A673 (cell line): ENCODE measurements at regions of chr12 and their contacts with region 1.

Region 1: DNA sequence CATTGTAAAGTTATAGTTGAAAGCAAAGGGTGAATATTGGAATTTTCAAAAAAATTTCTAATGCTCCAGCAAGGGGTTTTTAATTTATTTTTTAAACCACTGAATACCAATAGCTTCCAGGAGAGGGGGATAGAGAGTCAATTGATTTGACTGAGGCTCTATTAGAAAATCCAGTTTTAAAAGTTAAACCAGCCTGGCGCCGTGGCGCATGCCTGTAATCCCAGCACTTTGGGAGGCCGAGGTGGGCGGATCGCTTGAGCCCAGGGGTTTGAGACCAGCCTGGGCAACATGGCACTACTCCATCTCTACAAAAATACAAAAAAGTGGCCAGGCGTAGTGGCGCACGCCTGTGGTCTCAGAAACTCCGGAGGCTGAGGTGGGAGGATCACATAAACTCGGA is 150.1 kb downstream of the SLC38A4 start:
- DNase-seq: peak; percentile 82
- H3K4me3 ChIP-seq: no peak overlapping the region
- H3K27ac ChIP-seq: no peak overlapping the region
- H3K4me1 ChIP-seq: peaks cover 21% of the 10 kb centered on the region
- H3K27me3 ChIP-seq: no peaks in the 10 kb centered on the region
- CTCF ChIP-seq: peak; percentile 65

Region 2: GRCh38 chr12:46071769-46072624 is 603.7 kb before region 1 on chr12:
- CTCF ChIA-PET with region 1: no interaction called
- POLR2A ChIA-PET with region 1: no interaction called
- intact Hi-C with region 1: loop called (anchors 5 kb)
- DNase-seq: peak; percentile 87
- H3K4me3 ChIP-seq: no peak overlapping the region
- H3K27ac ChIP-seq: no peak overlapping the region
- H3K4me1 ChIP-seq: no peaks in the 10 kb centered on the region
- H3K27me3 ChIP-seq: no peaks in the 10 kb centered on the region
- CTCF ChIP-seq: peak; percentile 96

Region 3: GRCh38 chr12:46124848-46125619 is 550.7 kb before region 1 on chr12:
- CTCF ChIA-PET with region 1: no interaction called
- POLR2A ChIA-PET with region 1: no interaction called
- intact Hi-C with region 1: loop called (anchors 5 kb)
- DNase-seq: peak; percentile 92
- H3K4me3 ChIP-seq: peak overlapping the region; percentile 18
- H3K27ac ChIP-seq: peak overlapping the region; percentile 3
- H3K4me1 ChIP-seq: no peaks in the 10 kb centered on the region
- H3K27me3 ChIP-seq: no peaks in the 10 kb centered on the region
- CTCF ChIP-seq: peak; percentile 93

Region 4: GRCh38 chr12:46153268-46153872 is 522.4 kb before region 1 on chr12:
- CTCF ChIA-PET with region 1: no interaction called
- POLR2A ChIA-PET with region 1: no interaction called
- intact Hi-C with region 1: loop called (anchors 2 kb)
- DNase-seq: peak; percentile 55
- H3K4me3 ChIP-seq: no peak overlapping the region
- H3K27ac ChIP-seq: no peak overlapping the region
- H3K4me1 ChIP-seq: peaks cover 35% of the 10 kb centered on the region
- H3K27me3 ChIP-seq: no peaks in the 10 kb centered on the region
- CTCF ChIP-seq: peak; percentile 87

Region 5: GRCh38 chr12:46179683-46180452 is 495.9 kb before region 1 on chr12:
- CTCF ChIA-PET with region 1: no interaction called
- POLR2A ChIA-PET with region 1: no interaction called
- intact Hi-C with region 1: no loop called
- DNase-seq: no peak
- H3K4me3 ChIP-seq: no peak overlapping the region
- H3K27ac ChIP-seq: no peak overlapping the region
- H3K4me1 ChIP-seq: no peaks in the 10 kb centered on the region
- H3K27me3 ChIP-seq: no peaks in the 10 kb centered on the region
- CTCF ChIP-seq: no peak

Region 6: GRCh38 chr12:46342562-46343033 is 333.1 kb before region 1 on chr12:
- CTCF ChIA-PET with region 1: no interaction called
- POLR2A ChIA-PET with region 1: no interaction called
- intact Hi-C with region 1: loop called (anchors 2 kb)
- DNase-seq: peak; percentile 83
- H3K4me3 ChIP-seq: no peak overlapping the region
- H3K27ac ChIP-seq: no peak overlapping the region
- H3K4me1 ChIP-seq: no peaks in the 10 kb centered on the region
- H3K27me3 ChIP-seq: no peaks in the 10 kb centered on the region
- CTCF ChIP-seq: peak; percentile 77

Region 7: DNA sequence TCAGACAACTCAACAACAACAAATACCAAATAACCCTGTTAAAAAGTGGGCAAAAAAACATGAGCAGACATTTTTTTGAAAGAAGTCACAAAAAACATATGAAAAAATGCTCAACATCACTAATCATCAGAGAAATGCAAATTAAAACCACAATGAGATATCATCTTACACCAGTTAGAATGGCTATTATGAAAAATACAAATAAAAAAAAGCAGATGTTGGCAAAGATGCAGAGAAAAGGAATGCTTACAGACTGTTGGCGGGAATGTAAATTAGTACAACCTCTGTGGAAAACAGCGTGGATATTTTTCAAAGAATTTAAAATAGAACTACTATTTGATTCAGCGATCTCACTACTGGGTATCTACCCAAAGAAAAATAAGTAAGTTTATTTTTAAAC is 36.0 kb after region 1 on chr12:
- CTCF ChIA-PET with region 1: no interaction called
- POLR2A ChIA-PET with region 1: no interaction called
- intact Hi-C with region 1: no loop called
- DNase-seq: no peak
- H3K4me3 ChIP-seq: no peak overlapping the region
- H3K27ac ChIP-seq: no peak overlapping the region
- H3K4me1 ChIP-seq: no peaks in the 10 kb centered on the region
- H3K27me3 ChIP-seq: no peaks in the 10 kb centered on the region
- CTCF ChIP-seq: no peak

Region 8: GRCh38 chr12:46874642-46875041 is 198.9 kb after region 1 on chr12:
- CTCF ChIA-PET with region 1: no interaction called
- POLR2A ChIA-PET with region 1: no interaction called
- intact Hi-C with region 1: no loop called
- DNase-seq: no peak
- H3K4me3 ChIP-seq: no peak overlapping the region
- H3K27ac ChIP-seq: no peak overlapping the region
- H3K4me1 ChIP-seq: no peaks in the 10 kb centered on the region
- H3K27me3 ChIP-seq: no peaks in the 10 kb centered on the region
- CTCF ChIP-seq: no peak

Region 9: GRCh38 chr12:46933947-46934346 is 258.2 kb after region 1 on chr12:
- CTCF ChIA-PET with region 1: no interaction called
- POLR2A ChIA-PET with region 1: no interaction called
- intact Hi-C with region 1: loop called (anchors 5 kb)
- DNase-seq: peak; percentile 74
- H3K4me3 ChIP-seq: no peak overlapping the region
- H3K27ac ChIP-seq: peak overlapping the region; percentile 45
- H3K4me1 ChIP-seq: peaks cover 3% of the 10 kb centered on the region
- H3K27me3 ChIP-seq: no peaks in the 10 kb centered on the region
- CTCF ChIP-seq: peak; percentile 73

Region 10: DNA sequence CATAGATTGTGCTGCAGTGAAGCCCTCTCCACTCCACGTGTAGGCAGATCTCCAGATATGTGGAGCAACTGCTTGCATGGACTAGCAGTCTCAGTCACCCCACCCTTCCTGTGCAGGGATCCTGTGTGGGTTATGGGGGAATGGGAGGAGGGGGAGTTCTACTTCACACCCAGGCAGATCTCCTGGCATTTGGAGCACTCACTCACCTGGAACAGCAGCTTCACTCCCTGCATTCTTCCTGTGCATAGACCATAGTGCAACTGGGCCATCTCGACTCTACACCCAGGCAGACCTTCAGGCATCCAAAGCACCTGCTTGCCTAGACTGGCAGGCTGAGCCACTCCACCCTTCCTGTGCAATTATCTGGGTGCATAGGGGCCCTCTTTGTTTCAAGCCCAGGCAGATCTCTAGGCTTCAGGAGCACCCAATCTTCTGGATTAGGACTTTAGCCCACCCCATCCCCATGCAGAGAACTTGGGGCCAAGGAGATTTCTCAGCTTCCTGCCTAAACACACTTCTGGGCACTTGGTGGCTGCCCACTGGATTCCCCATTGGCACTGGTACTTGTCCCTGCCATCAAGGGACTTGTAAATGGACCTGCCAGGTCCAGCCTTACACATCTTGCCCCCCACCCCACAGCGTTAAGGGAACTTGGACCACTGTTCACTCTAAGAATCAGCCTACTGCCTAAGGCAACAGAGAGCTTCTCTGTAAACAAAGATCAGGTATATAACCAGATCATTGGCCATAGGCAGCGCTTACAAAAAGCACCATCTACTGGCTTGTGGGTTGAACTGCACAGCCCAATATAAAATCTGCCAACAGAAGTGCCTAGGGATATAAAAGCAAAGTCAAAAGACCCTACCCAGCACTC is 307.9 kb after region 1 on chr12:
- CTCF ChIA-PET with region 1: no interaction called
- POLR2A ChIA-PET with region 1: no interaction called
- intact Hi-C with region 1: loop called (anchors 5 kb)
- DNase-seq: peak; percentile 86
- H3K4me3 ChIP-seq: peak overlapping the region; percentile 17
- H3K27ac ChIP-seq: no peak overlapping the region
- H3K4me1 ChIP-seq: peaks cover 10% of the 10 kb centered on the region
- H3K27me3 ChIP-seq: no peaks in the 10 kb centered on the region
- CTCF ChIP-seq: peak; percentile 93